Left cardiac atrium (tissue), 4 donors: ENCODE measurements at regions of chr6 and their contacts with region 1.

Region 1: GRCh38 chr6:10658910-10659698 is 35.3 kb downstream of the C6orf52 start:
- DNase-seq: no peak
- ATAC-seq: no peak

Region 2: GRCh38 chr6:10643201-10643651 is 15.9 kb before region 1 on chr6:
- intact Hi-C with region 1: loop called in 1 of 2 experiments (anchors 1 kb)
- DNase-seq: no peak
- ATAC-seq: no peak